Activated T-helper 1 cell treated with anti-CD3 and anti-CD28 coated beads, Interleukin-12 subunit alpha, Interleukin-12 subunit beta, Interleukin-2, Interleukin-4 antibody, amounts not matched to agents 30 ng/mL and 10 ng/mL and 1 ng/mL, durations not matched to agents 14 hours and 24 hours and 36 hours (primary cell): ENCODE measurements at regions of chr7 and their contacts with region 1.

Region 1: DNA sequence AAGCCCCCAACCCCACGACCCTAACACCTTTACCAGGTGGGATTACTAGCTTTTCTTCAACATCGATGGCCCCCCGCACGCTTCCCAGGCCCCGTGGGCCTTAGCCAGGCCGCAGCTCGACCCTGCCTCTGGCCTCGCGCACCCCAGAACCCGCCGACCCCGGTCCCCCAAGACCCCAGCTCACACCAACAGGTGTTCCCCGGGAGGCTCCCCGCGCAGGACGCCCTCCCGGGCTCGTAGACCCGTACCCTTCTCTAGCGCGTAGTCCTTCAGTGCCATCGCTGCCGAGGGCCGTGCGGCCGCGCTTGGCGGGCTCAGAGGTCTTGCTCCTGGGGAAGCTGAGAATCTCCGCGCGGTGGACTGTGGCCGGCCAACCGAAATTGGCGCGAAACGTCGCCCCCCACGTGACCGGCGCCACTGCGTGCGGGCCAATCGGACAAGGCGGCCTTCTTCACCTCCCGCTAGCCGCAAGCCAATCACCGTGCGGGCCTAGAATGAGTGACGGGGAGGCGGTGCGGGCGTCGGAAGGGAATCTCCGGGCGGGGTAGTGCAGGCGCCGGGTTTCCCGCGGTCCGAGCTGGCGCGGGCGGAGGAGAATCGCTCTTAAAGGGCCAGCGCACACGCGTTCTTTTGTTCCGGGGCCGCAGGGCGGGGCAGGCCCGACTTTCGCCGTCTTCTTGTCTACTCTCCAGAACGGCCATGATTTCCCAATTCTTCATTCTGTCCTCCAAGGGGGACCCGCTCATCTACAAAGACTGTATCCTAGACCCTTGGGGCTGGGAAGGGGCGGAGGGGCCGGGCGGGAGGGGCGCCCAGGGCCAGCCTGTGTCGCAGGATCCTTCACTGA is at the starts of genes AP4M1 and MCM7:
- DNase-seq: peak; percentile 98
- H3K4me3 Mint-ChIP-seq: peak within 1 kb of the TSS; percentile 94
- H3K27ac Mint-ChIP-seq: peak within 1 kb of the TSS; percentile 97
- H3K4me1 Mint-ChIP-seq: peaks cover 39% of the 10 kb centered on the region
- H3K27me3 Mint-ChIP-seq: no peaks in the 10 kb centered on the region
- total RNA-seq, gene AP4M1: 12.3 and 15.9 TPM in 2 replicates
- total RNA-seq, gene MCM7: 447 and 452 TPM in 2 replicates

Region 2: GRCh38 chr7:99616359-99617191 is 484.7 kb before region 1 on chr7 and contains the start of gene ZSCAN25:
- intact Hi-C with region 1: loop called (anchors 2 kb)
- DNase-seq: peak; percentile 79
- H3K4me3 Mint-ChIP-seq: peak within 1 kb of the TSS; percentile 96
- H3K27ac Mint-ChIP-seq: peak within 1 kb of the TSS; percentile 94
- H3K4me1 Mint-ChIP-seq: peaks cover 56% of the 10 kb centered on the region
- H3K27me3 Mint-ChIP-seq: peaks cover 4% of the 10 kb centered on the region
- total RNA-seq, gene ZSCAN25: 31.5 and 32.9 TPM in 2 replicates

Region 3: GRCh38 chr7:99949638-99950228 is 151.5 kb before region 1 on chr7:
- intact Hi-C with region 1: no loop called
- DNase-seq: no peak
- H3K4me3 Mint-ChIP-seq: no peak overlapping the region
- H3K27ac Mint-ChIP-seq: no peak overlapping the region
- H3K4me1 Mint-ChIP-seq: no peaks in the 10 kb centered on the region
- H3K27me3 Mint-ChIP-seq: peaks cover 5% of the 10 kb centered on the region

Region 4: GRCh38 chr7:99975782-99976521 is 125.3 kb before region 1 on chr7 and contains the start of gene AZGP1:
- intact Hi-C with region 1: no loop called
- DNase-seq: no peak
- H3K4me3 Mint-ChIP-seq: no peak within 1 kb of the TSS
- H3K27ac Mint-ChIP-seq: no peak within 1 kb of the TSS
- H3K4me1 Mint-ChIP-seq: no peaks in the 10 kb centered on the region
- H3K27me3 Mint-ChIP-seq: peaks cover 4% of the 10 kb centered on the region
- total RNA-seq, gene AZGP1: not detected in 2 replicates

Region 5: GRCh38 chr7:100088621-100089457 is 12.4 kb before region 1 on chr7 and contains the start of gene COPS6:
- intact Hi-C with region 1: loop called (anchors 1 kb)
- DNase-seq: peak; percentile 82
- H3K4me3 Mint-ChIP-seq: peak within 1 kb of the TSS; percentile 90
- H3K27ac Mint-ChIP-seq: peak within 1 kb of the TSS; percentile 93
- H3K4me1 Mint-ChIP-seq: peaks cover 29% of the 10 kb centered on the region
- H3K27me3 Mint-ChIP-seq: peaks cover 6% of the 10 kb centered on the region
- total RNA-seq, gene COPS6: 101 and 115 TPM in 2 replicates

Region 6: DNA sequence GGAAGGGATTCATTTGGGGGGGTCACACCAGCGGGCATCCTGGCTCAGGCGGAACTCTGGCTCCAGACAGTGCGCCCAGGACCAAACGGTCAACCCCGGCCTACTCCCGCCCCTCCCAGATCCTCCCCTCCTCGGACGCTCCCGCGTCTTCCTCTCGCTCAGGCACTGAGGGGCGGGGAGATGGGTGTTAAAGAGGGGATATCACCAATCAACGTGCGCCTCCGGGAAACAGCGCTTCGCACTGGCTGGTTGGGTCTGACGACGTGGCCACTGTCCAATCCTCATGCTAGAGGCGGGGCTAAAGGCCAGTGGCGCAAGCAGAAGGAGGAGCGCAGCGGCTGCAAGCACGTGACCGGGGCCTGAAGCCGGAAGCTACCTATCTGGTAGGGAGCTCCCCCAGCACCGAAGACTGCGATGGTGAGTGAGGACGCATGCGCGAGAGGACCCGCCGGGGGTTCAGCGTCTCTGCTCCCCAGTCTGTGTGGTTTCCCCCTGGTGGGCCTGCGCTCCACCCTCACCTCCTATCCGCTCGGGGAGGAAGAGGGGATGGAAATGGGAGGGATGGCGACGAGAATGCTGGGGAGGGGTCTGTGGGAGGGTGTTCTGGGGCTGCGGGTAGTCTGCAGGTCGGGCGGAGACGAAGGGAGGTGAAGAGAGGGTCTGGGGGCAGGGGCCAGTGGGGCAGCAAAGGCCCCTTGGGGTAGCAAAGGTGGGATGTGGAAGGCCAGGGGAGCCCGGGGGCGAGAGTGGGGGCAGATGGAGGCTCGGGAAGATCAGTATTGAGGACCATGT is 47.5 kb after region 1 on chr7 and contains the start of gene LAMTOR4:
- intact Hi-C with region 1: loop called (anchors 1 kb)
- DNase-seq: peak; percentile 99
- H3K4me3 Mint-ChIP-seq: peak within 1 kb of the TSS; percentile 97
- H3K27ac Mint-ChIP-seq: peak within 1 kb of the TSS; percentile 94
- H3K4me1 Mint-ChIP-seq: peaks cover 24% of the 10 kb centered on the region
- H3K27me3 Mint-ChIP-seq: no peaks in the 10 kb centered on the region
- total RNA-seq, gene LAMTOR4: 119 and 133 TPM in 2 replicates

Region 7: GRCh38 chr7:100247152-100247757 is 146.0 kb after region 1 on chr7:
- intact Hi-C with region 1: no loop called
- DNase-seq: no peak
- H3K4me3 Mint-ChIP-seq: no peak overlapping the region
- H3K27ac Mint-ChIP-seq: no peak overlapping the region
- H3K4me1 Mint-ChIP-seq: peaks cover 7% of the 10 kb centered on the region
- H3K27me3 Mint-ChIP-seq: no peaks in the 10 kb centered on the region

Region 8: DNA sequence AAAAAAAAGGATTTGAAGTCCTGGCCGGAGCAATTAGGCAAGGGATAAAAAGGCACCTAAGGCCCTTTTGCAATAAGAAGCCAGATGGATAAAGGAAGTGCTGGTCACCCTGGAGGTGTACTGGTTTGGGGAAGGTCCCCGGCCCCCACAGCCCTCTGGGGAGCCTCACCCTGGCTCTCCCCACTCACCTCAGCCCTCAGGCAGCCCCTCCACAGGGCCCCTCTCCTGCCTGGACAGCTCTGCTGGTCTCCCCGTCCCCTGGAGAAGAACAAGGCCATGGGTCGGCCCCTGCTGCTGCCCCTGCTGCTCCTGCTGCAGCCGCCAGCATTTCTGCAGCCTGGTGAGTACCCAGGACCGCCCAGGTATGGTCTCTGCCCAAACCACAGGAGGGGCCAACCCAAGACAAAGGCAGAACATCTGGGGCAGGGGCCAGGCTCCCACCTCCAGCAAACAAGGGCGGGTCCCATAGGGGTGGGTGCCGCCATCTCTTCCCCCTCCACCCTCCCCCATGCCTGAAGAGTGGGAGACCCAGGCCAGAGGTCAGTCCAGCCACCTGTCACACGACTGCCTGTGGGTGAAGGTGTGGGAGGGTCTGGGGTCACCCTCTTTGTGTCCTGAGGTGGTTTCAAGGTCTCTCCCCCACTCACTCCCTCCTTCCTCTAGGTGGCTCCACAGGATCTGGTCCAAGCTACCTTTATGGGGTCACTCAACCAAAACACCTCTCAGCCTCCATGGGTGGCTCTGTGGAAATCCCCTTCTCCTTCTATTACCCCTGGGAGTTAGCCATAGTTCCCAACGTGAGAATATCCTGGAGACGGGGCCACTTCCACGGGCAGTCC is 257.0 kb after region 1 on chr7 and contains the start of gene PILRB:
- intact Hi-C with region 1: no loop called
- DNase-seq: no peak
- H3K4me3 Mint-ChIP-seq: no peak within 1 kb of the TSS
- H3K27ac Mint-ChIP-seq: no peak within 1 kb of the TSS
- H3K4me1 Mint-ChIP-seq: peaks cover 14% of the 10 kb centered on the region
- H3K27me3 Mint-ChIP-seq: no peaks in the 10 kb centered on the region
- total RNA-seq, gene PILRB: 82.6 and 83.9 TPM in 2 replicates

Region 9: GRCh38 chr7:100435401-100436304 is 334.4 kb after region 1 on chr7:
- intact Hi-C with region 1: loop called (anchors 1 kb)
- DNase-seq: peak; percentile 42
- H3K4me3 Mint-ChIP-seq: peak overlapping the region; percentile 94
- H3K27ac Mint-ChIP-seq: peak overlapping the region; percentile 88
- H3K4me1 Mint-ChIP-seq: peaks cover 41% of the 10 kb centered on the region
- H3K27me3 Mint-ChIP-seq: no peaks in the 10 kb centered on the region